Natural killer cell (primary cell): ENCODE measurements at regions of chr4 and their contacts with region 1.

Region 1: GRCh38 chr4:102610007-102610406 is 108.8 kb downstream of the NFKB1 start:
- DNase-seq: peak in 1 of 2 donors; percentile 38
- ATAC-seq: no peak
- H3K4me3 ChIP-seq: no peak overlapping the region
- H3K4me3 Mint-ChIP-seq: no peak overlapping the region
- H3K27ac ChIP-seq: no peak overlapping the region
- H3K27ac Mint-ChIP-seq: peak overlapping the region in 1 of 2 donors; percentile 95
- H3K4me1 ChIP-seq: peaks cover 39% of the 10 kb centered on the region
- H3K4me1 Mint-ChIP-seq: peaks cover 45% of the 10 kb centered on the region in 2 donors
- H3K27me3 ChIP-seq: no peaks in the 10 kb centered on the region
- H3K27me3 Mint-ChIP-seq: no peaks in the 10 kb centered on the region
- CTCF ChIP-seq: no peak

Region 2: GRCh38 chr4:102500696-102501446 is 109.1 kb before region 1 on chr4 and contains the start of gene NFKB1:
- intact Hi-C with region 1: loop called (anchors 2 kb)
- DNase-seq: peak; percentile 84 to 96
- ATAC-seq: peak; percentile 71 to 86 (median 78)
- H3K4me3 ChIP-seq: peak within 1 kb of the TSS; percentile 95
- H3K4me3 Mint-ChIP-seq: peak within 1 kb of the TSS; percentile 96
- H3K27ac ChIP-seq: peak within 1 kb of the TSS; percentile 99
- H3K27ac Mint-ChIP-seq: peak within 1 kb of the TSS; percentile 97
- H3K4me1 ChIP-seq: peaks cover 11% of the 10 kb centered on the region
- H3K4me1 Mint-ChIP-seq: peaks cover 36 to 41% of the 10 kb centered on the region in 2 donors
- H3K27me3 ChIP-seq: no peaks in the 10 kb centered on the region
- H3K27me3 Mint-ChIP-seq: peaks cover 0 to 7% of the 10 kb centered on the region in 2 donors
- CTCF ChIP-seq: no peak
- total RNA-seq, gene NFKB1: 144 to 235 (median 163) TPM

Region 3: DNA sequence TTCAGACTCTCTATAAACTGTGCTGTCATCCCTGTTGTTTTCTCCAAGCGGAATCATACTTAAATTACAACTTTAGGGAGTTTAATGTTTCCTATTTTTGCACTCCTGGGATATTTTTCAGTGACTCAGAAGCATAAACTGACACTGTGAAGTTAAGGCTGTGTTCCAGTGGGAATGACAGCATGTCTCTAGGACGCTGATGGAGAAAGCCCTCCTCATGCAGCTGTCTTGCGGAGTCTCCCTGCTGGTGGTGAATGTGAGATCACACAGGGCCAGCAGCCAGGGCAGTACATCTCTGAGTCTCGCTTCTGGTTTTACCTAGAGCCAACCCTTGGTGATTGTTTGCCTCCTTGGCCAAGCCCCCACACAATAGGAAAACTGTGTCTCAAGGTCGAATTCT is 55.5 kb before region 1 on chr4:
- intact Hi-C with region 1: loop called (anchors 5 kb)
- DNase-seq: no peak
- ATAC-seq: no peak
- H3K4me3 ChIP-seq: no peak overlapping the region
- H3K4me3 Mint-ChIP-seq: no peak overlapping the region
- H3K27ac ChIP-seq: no peak overlapping the region
- H3K27ac Mint-ChIP-seq: peak overlapping the region in 1 of 2 donors; percentile 75
- H3K4me1 ChIP-seq: peaks cover under 1% of the 10 kb centered on the region
- H3K4me1 Mint-ChIP-seq: peaks cover 39 to 49% of the 10 kb centered on the region in 2 donors
- H3K27me3 ChIP-seq: no peaks in the 10 kb centered on the region
- H3K27me3 Mint-ChIP-seq: no peaks in the 10 kb centered on the region
- CTCF ChIP-seq: no peak

Region 4: DNA sequence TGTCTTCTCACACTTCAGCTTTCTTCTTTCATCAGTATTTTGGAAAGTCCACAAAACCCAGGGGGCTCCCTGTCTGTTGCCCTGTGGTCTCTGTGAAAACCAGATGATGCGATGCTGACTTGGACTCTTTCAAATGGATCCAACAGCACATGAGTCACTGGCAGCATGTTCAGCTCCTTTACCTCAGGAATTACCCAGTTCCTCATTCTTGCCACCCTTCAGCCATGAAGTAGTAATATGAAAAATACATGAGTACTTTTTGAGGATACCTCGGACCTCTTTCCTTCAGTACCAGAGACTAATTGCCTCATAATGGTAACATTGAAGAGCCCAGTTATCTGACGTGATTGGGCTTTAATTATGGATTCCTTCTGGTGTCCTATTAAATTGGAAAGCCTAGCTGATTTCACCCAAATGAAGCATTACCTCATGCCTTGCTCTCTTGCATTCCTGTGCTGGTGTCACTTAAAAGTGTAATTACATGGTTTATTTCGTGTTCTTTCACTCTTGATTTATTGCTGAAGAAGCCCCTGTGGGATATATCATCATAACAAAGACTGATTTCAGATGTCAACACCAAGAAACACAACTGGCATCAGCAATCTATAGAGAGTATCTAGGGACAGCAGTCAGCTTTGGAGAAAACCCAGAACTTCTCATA is 45.5 kb before region 1 on chr4:
- intact Hi-C with region 1: loop called (anchors 5 kb)
- DNase-seq: peak in 1 of 2 donors; percentile 49
- ATAC-seq: peak; percentile 38 to 45 (median 41)
- H3K4me3 ChIP-seq: no peak overlapping the region
- H3K4me3 Mint-ChIP-seq: no peak overlapping the region
- H3K27ac ChIP-seq: no peak overlapping the region
- H3K27ac Mint-ChIP-seq: peak overlapping the region; percentile 27 to 54
- H3K4me1 ChIP-seq: peaks cover 7% of the 10 kb centered on the region
- H3K4me1 Mint-ChIP-seq: peaks cover 50 to 53% of the 10 kb centered on the region in 2 donors
- H3K27me3 ChIP-seq: no peaks in the 10 kb centered on the region
- H3K27me3 Mint-ChIP-seq: no peaks in the 10 kb centered on the region
- CTCF ChIP-seq: no peak

Region 5: GRCh38 chr4:102868781-102869568 is 259.0 kb after region 1 on chr4 and contains the start of gene CISD2:
- intact Hi-C with region 1: loop called (anchors 5 kb)
- DNase-seq: peak; percentile 92 to 96
- ATAC-seq: peak; percentile 83 to 95 (median 87)
- H3K4me3 ChIP-seq: peak within 1 kb of the TSS; percentile 76
- H3K4me3 Mint-ChIP-seq: peak within 1 kb of the TSS; percentile 93
- H3K27ac ChIP-seq: peak within 1 kb of the TSS; percentile 96
- H3K27ac Mint-ChIP-seq: peak within 1 kb of the TSS; percentile 97 to 99
- H3K4me1 ChIP-seq: peaks cover 16% of the 10 kb centered on the region
- H3K4me1 Mint-ChIP-seq: peaks cover 19 to 24% of the 10 kb centered on the region in 2 donors
- H3K27me3 ChIP-seq: no peaks in the 10 kb centered on the region
- H3K27me3 Mint-ChIP-seq: no peaks in the 10 kb centered on the region
- CTCF ChIP-seq: no peak
- total RNA-seq, gene CISD2: 11.2 to 13.8 (median 13.5) TPM

Region 6: GRCh38 chr4:103008875-103009729 is 399.1 kb after region 1 on chr4:
- intact Hi-C with region 1: loop called (anchors 5 kb)
- DNase-seq: peak in 1 of 2 donors; percentile 85
- ATAC-seq: peak; percentile 89 to 97 (median 90)
- H3K4me3 ChIP-seq: no peak overlapping the region
- H3K4me3 Mint-ChIP-seq: no peak overlapping the region
- H3K27ac ChIP-seq: no peak overlapping the region
- H3K27ac Mint-ChIP-seq: no peak overlapping the region
- H3K4me1 ChIP-seq: no peaks in the 10 kb centered on the region
- H3K4me1 Mint-ChIP-seq: no peaks in the 10 kb centered on the region
- H3K27me3 ChIP-seq: no peaks in the 10 kb centered on the region
- H3K27me3 Mint-ChIP-seq: peaks cover 3 to 5% of the 10 kb centered on the region in 2 donors
- CTCF ChIP-seq: peak; percentile 85